ENCODE measurements at regions of chr17 and their contacts with region 1.

Region 1: GRCh38 chr17:28763804-28764266 is 20.0 kb downstream of the TRAF4 start:
- H3K4me3 ChIP-seq: no peak overlapping the region
- H3K27ac ChIP-seq: no peak overlapping the region
- H3K4me1 ChIP-seq: no peaks in the 10 kb centered on the region; the same call in 1 of the 2 replicates
- CTCF ChIP-seq: peak; percentile 51; the same call in 1 of the 2 replicates

Region 2: DNA sequence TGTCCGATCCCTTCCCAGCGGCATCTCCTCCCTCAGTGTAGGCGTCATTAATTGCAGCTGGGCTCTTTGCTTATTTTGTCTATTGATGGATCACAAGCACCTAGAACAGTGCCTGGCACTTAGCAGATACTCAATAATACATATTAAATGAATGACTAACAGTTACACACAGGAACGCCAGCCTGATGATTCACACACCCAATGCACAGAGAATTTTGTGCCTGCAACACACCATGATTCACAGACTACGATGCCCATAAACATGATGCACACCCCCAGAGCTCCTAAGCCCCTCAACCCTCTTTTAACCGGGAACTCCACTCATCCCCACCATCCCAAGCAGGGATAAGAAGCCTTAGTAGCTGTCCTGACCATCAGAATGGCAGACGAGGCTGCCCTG is 511.4 kb before region 1 on chr17:
- CTCF ChIA-PET with region 1: no interaction called
- POLR2A ChIA-PET with region 1: no interaction called
- H3K4me3 ChIP-seq: no peak overlapping the region
- H3K27ac ChIP-seq: no peak overlapping the region
- H3K4me1 ChIP-seq: no peaks in the 10 kb centered on the region
- CTCF ChIP-seq: no peak

Region 3: GRCh38 chr17:28777178-28777577 is 13.3 kb after region 1 on chr17:
- CTCF ChIA-PET with region 1: interaction called, 98 read pairs
- POLR2A ChIA-PET with region 1: interaction called, 3 read pairs
- H3K4me3 ChIP-seq: no peak overlapping the region
- H3K27ac ChIP-seq: 0 out of 2 replicates have a peak overlapping the region, but pooled peaks have one; percentile 14
- H3K4me1 ChIP-seq: 0 out of 2 replicates have a peak, but pooled peaks cover 4% of the 10 kb centered on the region
- CTCF ChIP-seq: no peak

Region 4: DNA sequence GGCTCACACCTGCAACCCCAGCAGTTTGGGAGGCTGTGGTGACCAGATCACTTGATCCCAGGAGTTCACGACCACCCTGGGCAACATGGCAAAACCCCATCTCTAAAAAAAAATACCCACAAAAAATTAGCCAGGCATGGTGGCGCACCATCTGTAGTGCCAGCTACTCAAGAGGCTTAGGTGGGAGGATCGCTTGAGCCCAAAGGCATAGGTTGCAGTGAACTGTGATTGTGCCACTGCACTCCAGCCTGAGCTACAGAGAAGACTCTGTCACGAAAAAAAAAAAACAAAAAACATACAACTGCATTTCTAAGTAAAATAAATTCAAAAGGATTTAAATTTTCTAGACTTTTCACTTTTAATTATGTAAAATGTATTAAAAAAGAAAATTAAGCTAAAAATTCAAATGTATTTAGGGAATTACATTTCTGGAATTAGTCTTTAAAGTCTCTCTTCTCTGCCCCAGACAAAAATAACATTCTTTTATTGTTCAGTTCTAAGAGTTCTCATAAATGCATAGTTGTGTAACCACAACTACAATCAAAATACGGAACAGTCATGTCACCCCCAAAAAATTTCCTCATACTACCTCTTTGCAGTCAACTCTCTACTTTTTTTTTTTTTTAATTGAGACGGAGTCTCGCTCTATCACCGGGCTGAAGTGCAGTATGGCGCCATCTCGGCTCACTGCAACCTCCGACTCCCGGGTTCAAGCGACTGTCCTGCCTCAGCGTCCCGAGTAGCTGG is 64.6 kb after region 1 on chr17:
- CTCF ChIA-PET with region 1: interaction called, 14 read pairs
- POLR2A ChIA-PET with region 1: no interaction called
- H3K4me3 ChIP-seq: no peak overlapping the region
- H3K27ac ChIP-seq: no peak overlapping the region
- H3K4me1 ChIP-seq: 0 out of 2 replicates have a peak, but pooled peaks cover 2% of the 10 kb centered on the region
- CTCF ChIP-seq: no peak

Region 5: DNA sequence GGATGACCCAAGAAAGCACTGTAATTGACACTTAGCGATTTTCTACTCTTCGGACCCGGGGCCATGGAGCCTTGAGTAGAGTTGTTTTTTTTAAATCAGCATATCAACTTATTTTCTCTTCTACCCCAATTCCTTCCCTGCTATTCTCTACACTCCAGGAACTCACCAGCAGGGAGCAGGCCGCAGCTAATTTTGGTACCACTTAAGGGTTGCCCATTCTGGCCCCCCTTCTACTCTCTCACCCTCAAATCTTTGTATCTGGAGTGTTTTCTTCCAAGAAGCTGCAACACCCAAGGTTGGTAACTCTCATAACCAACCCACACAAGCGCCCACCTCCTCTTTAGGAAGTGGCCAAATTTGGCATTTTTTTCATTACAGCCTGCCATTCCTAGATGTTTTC is 85.4 kb after region 1 on chr17:
- CTCF ChIA-PET with region 1: interaction called, 52 read pairs
- POLR2A ChIA-PET with region 1: no interaction called
- H3K4me3 ChIP-seq: no peak overlapping the region
- H3K27ac ChIP-seq: no peak overlapping the region
- H3K4me1 ChIP-seq: no peaks in the 10 kb centered on the region
- CTCF ChIP-seq: no peak

Region 6: DNA sequence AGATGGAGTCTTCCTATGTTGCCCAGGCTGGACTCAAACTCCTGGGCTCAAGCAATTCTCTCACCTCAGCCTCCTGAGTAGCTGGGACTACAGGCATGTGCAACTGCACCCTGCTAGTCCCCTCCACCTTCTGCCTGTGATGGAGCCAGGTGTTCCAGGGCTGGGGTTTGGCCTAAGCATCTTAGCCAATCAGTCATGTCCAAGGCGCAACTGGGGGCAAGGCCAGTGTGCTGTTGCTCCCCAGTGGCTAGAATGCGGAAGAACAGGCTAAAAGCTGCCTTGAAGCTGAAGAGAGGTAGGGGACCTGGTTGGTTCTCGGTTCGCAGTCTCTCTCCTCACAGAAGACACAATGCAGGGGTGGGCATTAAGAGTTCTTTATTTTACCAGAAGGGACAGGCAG is 115.1 kb after region 1 on chr17:
- CTCF ChIA-PET with region 1: interaction called, 64 read pairs
- POLR2A ChIA-PET with region 1: interaction called, 7 read pairs
- H3K4me3 ChIP-seq: no peak overlapping the region
- H3K27ac ChIP-seq: no peak overlapping the region
- H3K4me1 ChIP-seq: no peaks in the 10 kb centered on the region
- CTCF ChIP-seq: peak; percentile 65

Region 7: GRCh38 chr17:28916302-28916934 is 152.6 kb after region 1 on chr17:
- CTCF ChIA-PET with region 1: interaction called, 23 read pairs
- POLR2A ChIA-PET with region 1: interaction called, 3 read pairs
- H3K4me3 ChIP-seq: no peak overlapping the region
- H3K27ac ChIP-seq: no peak overlapping the region
- H3K4me1 ChIP-seq: no peaks in the 10 kb centered on the region
- CTCF ChIP-seq: peak; percentile 58; the same call in 1 of the 2 replicates

Region 8: DNA sequence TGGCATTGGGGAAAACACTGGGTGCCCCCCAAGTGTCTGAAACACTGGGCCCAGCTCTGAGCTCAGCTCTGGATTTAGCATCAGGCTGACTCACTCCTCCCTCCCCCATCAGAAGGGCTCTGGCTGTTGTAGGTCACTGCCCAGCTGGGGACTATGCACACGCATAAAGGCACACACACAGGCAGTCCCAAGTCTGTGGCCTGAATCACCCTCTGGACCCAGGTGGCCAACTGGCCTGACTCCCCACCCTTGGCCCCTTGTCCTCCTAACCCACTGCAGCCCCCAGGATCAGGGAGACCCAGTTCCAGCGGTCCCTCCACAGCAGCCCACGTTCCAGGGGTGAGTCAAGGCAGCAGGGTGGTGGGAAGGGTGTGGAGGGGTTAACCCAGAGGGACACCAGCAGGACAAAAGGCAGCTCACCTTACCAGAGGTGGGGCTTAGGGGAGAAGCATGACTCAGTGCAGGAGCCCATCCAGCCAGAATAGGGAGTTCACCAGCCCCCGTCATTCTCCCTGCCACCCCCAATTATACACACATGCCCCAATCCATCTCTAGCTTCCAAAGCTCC is 369.4 kb after region 1 on chr17:
- CTCF ChIA-PET with region 1: no interaction called
- POLR2A ChIA-PET with region 1: no interaction called
- H3K4me3 ChIP-seq: no peak overlapping the region
- H3K27ac ChIP-seq: no peak overlapping the region
- H3K4me1 ChIP-seq: peaks cover 2% of the 10 kb centered on the region; the same call in 1 of the 2 replicates
- CTCF ChIP-seq: no peak

Measured in HEK293 (cell line).